IMR-90 (cell line): ENCODE measurements at regions of chr7 and their contacts with region 1.

Region 1: GRCh38 chr7:1239803-1240516 is 7.3 kb downstream of the UNCX start:
- DNase-seq: no peak
- ATAC-seq: no peak
- H3K4me3 ChIP-seq: no peak overlapping the region
- H3K27ac ChIP-seq: no peak overlapping the region
- H3K4me1 ChIP-seq: no peaks in the 10 kb centered on the region
- H3K27me3 ChIP-seq: peaks cover 92% of the 10 kb centered on the region
- CTCF ChIP-seq: no peak
- POLR2A ChIP-seq: no peak
- RAD21 ChIP-seq: no peak

Region 2: GRCh38 chr7:774161-775109 is 465.5 kb before region 1 on chr7:
- CTCF ChIA-PET with region 1: no interaction called
- POLR2A ChIA-PET with region 1: interaction called, 12 read pairs
- dilution Hi-C with region 1: no loop called
- in situ Hi-C with region 1: no loop called
- intact Hi-C with region 1: no loop called
- DNase-seq: peak; percentile 20
- ATAC-seq: peak; percentile 89
- H3K4me3 ChIP-seq: no peak overlapping the region
- H3K27ac ChIP-seq: no peak overlapping the region
- H3K4me1 ChIP-seq: peaks cover 10% of the 10 kb centered on the region
- H3K27me3 ChIP-seq: no peaks in the 10 kb centered on the region
- CTCF ChIP-seq: peak; percentile 95
- POLR2A ChIP-seq: peak; percentile 36; the same call in 1 of the 2 replicates
- RAD21 ChIP-seq: peak; percentile 95

Region 3: GRCh38 chr7:883055-884021 is 356.6 kb before region 1 on chr7:
- CTCF ChIA-PET with region 1: no interaction called
- POLR2A ChIA-PET with region 1: no interaction called
- dilution Hi-C with region 1: no loop called
- in situ Hi-C with region 1: no loop called
- intact Hi-C with region 1: no loop called
- DNase-seq: no peak
- ATAC-seq: no peak
- H3K4me3 ChIP-seq: no peak overlapping the region
- H3K27ac ChIP-seq: no peak overlapping the region
- H3K4me1 ChIP-seq: no peaks in the 10 kb centered on the region
- H3K27me3 ChIP-seq: no peaks in the 10 kb centered on the region
- CTCF ChIP-seq: no peak
- POLR2A ChIP-seq: no peak
- RAD21 ChIP-seq: no peak